ENCODE measurements at regions of chr7 and their contacts with region 1.

Region 1: GRCh38 chr7:38222481-38223096 is 44.5 kb downstream of the STARD3NL start:
- DNase-seq: peak; percentile 36
- CTCF ChIP-seq: peak; percentile 76

Region 2: DNA sequence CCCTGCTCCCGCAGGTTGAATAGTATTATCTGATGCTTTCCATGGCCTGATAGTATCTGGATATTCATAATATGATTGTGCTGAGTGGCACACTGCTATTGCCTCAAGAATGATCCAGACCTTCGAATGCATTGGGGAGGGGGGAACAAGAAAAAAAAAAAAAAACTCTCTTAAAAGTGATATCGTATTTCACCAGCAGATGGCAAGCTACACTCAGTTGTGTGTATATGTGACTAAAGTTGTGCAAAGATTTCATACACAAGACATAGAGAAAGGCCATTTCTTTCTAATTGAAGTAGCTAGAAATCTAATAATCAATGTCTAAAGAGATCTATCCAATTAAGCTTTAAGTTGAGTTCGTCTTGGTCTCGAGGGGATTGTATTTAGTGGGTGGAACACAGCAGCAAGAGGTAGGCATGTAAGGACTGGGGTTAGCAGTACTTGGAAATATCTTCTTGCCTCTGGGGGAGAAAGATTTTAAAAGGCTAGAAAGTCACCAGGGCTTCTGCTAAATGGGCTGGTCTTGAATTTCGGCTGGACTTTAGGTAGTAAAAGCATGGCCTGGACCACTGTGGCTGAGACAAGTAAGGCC is 321.3 kb before region 1 on chr7:
- in situ Hi-C with region 1: loop called (anchors 10 kb)
- DNase-seq: no peak
- CTCF ChIP-seq: peak; percentile 48

Region 3: DNA sequence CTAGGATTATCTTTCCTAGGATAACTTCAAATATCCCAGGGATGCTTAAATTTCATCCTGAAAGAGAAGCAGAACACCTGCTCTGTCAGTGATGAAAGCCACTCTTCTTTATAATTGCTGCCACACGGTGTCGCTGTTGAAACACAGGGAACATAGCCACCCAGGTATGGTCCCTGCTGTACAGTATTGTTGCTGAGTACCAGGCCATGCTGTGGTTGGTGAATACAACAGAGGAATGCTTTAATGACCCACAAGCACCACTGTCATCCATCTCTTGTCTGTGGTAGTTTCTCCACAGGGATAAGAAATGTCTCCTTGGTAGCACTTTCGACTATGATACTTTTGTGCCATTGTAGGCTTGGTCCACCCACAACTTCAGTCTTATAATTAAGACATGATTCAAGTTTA is 115.1 kb before region 1 on chr7:
- in situ Hi-C with region 1: loop called (anchors 5 kb)
- DNase-seq: peak; percentile 52
- CTCF ChIP-seq: peak; percentile 81

Region 4: GRCh38 chr7:38321515-38321944 is 98.9 kb after region 1 on chr7:
- in situ Hi-C with region 1: loop called (anchors 10 kb)
- DNase-seq: no peak
- CTCF ChIP-seq: no peak

Region 5: DNA sequence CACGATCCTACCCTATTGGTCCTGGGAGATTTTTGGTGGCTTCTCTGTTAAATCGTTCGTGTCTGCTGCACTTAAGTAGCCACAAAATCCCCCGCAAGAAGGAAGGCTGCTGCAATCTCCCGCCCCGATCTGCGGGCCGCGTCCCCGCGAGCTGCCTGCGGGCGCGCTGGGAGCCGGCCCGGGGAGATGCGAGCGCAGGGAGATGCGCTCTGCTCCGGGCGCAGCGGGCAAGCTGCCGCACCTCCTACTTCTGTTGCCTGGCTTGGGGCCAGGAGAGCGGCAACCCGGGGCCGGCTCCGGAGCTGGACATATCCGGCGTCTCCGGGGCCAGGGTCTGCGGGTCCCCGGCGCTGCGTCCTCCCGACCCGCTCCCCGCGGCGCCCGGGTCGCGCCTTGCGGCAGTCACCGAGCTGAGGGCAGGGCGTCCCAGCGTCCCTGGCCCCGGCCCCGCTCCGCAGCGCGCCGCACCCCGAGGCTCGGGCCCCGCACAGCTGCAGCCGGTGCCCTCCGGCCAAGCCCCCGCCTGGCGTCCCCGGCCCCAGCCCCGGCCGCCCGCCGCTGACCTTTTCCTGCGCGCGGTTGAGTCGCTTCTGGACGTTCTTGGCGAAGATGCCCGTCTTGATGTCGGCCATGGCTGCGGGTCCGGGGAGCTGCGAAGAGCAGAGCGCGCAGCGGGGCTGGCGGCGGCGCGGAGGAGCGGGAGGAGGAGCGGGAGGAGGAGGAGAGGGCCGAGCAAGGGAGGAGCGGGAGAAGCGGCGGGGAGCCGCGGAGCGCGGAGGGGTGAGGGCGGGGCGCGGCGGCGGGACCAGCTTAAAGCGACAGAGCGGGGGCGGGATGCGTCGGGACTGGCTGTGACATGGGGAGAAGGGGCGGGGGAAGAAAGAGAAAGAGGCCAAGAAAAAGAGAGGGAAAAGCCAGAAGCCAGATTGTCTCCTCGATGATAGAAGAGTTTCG is 408.4 kb after region 1 on chr7 and contains the start of gene AMPH:
- in situ Hi-C with region 1: no loop called
- DNase-seq: peak; percentile 18
- CTCF ChIP-seq: no peak